GM13977 (cell line): ENCODE measurements at regions of chr12 and their contacts with region 1.

Region 1: GRCh38 chr12:569803-570434 is 93.3 kb downstream of the NINJ2 start:
- DNase-seq: peak; percentile 96
- CTCF ChIP-seq: peak; percentile 96

Region 2: DNA sequence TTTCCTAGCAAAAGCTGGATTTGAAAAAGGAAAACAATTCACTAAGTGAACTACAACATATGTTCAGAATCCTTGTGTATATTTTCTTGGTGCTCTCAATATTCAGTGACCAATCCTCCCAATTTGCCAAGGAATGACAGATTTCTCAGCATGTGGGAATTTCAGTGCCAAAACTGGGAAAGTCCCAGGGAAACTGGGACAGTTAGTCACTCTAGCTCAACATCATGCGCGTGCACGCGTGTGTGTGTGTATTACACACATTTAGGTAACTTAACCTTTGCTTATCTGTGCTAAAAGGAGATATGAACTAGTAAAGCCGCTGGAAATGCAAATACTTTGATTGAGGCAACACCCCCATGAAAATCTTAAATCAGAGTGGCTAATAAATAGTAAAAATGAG is 281.2 kb before region 1 on chr12:
- in situ Hi-C with region 1: no loop called
- DNase-seq: no peak
- CTCF ChIP-seq: no peak

Region 3: DNA sequence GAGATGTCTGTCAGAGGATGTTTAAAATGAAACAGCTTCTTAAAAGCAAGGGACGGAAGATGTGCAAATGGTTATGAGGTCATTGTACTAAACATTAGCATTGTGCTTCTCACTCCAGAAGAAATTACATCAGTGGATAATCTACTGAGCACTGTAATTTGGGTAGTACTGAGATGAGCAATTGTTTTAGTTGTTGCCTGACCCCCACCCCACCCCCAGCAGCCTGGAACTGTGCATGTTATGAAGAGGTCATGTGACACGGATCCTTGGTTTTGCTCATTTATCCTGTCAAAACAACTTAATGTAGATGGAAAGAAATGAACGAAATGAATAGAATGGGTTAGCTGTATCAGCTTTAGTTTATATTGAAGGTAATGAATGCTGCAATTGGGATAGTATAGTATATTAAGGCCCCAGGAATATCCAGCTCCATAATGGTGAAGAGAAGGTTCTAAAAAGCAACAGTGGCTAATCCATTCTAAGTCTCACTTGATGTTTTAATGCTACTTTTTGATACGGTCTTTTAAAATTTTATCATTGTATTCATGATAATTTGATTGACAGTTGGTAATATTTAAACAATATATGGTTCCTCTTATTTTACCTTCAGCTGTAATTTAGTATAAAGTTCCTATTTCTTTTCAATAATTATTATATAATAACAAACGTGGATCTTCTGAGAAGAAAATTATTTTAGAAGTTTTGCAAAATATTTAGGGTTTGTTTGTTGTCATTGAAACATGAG is 240.9 kb after region 1 on chr12:
- in situ Hi-C with region 1: loop called (anchors 5 kb)
- DNase-seq: peak; percentile 69
- CTCF ChIP-seq: no peak

Region 4: DNA sequence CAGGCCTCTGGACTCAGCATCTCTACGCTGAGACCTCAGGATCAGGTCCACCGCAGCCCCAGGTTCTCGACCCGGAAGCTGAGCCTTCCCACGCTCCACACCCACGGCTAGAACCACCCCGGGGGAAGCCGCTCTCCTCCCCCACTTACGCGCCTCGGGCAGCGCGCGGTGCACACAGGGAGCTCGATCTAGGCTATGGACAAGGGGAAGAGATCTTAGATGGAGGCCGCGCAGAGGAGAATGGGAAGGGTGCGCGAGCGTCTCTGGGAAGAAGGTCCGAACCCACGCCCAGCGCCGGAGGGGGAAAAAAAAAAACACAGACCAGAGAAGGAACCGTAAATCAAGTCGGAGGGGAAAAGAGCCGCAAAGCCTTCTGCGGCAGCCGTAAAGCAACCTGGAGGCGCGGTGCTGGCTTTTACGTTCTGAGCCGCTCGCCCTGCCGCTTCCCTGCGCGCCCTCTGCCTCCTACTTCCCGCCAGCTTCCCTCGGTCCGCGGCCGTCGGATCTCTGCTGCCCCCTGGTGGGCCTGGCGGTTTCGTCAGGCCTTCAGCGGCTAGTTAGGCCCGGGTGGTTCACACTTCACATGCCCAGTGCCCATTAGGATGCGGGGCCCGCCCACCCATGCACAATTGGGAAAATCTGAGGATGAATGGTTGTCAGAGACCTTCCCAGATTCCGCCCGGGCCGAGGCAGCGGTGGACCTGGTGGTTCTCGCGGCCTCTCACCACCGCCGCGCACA is 379.7 kb after region 1 on chr12 and contains the start of gene RAD52:
- in situ Hi-C with region 1: loop called (anchors 25 kb)
- DNase-seq: peak; percentile 88
- CTCF ChIP-seq: peak; percentile 94